ENCODE measurements at regions of chr1 and their contacts with region 1.

Region 1: DNA sequence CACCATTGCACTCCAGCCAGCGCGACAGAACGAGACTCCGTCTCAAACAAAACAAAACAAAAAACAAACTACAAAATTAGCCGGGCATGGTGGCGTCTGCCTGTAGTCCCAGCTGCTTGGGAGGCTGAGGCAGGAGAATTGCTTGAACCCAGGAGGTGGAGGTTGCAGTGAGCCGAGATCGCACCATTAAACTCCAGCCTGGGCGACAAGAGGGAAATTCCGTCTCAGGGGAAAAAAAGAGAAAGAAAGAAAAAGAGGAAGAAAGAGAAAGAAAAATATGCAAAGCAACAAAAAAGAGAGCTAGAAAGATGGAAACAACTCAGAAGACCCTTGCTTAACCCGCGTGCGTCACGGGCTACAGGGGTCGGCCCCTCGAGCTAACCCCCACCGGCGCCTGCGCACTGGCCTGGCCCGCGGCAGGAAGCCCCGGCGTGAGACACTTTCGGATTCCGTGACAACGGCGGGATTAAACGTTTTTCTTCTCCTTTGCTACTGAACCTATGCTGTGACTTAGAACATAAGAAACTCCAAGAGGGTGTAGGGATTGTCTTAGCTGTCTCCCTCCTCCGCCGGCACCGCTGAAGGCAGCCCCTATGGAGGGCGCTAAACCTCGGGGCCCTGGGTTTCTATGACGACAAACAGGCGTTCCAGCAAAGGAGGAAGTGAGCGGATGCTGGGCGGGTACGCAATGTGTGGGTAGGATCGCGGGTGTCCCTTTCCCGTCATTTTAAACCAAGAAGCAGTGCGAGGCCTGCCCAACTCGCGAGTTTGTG is at the start of gene AXDND1:
- DNase-seq: peak; percentile 79
- H3K4me3 Mint-ChIP-seq: peak within 1 kb of the TSS; percentile 77
- H3K27ac Mint-ChIP-seq: peak within 1 kb of the TSS; percentile 99
- H3K4me1 Mint-ChIP-seq: peaks cover 5% of the 10 kb centered on the region
- H3K27me3 Mint-ChIP-seq: no peaks in the 10 kb centered on the region
- CTCF ChIP-seq: no peak
- total RNA-seq, gene AXDND1: 1.1 and 1.7 TPM in 2 replicates

Region 2: DNA sequence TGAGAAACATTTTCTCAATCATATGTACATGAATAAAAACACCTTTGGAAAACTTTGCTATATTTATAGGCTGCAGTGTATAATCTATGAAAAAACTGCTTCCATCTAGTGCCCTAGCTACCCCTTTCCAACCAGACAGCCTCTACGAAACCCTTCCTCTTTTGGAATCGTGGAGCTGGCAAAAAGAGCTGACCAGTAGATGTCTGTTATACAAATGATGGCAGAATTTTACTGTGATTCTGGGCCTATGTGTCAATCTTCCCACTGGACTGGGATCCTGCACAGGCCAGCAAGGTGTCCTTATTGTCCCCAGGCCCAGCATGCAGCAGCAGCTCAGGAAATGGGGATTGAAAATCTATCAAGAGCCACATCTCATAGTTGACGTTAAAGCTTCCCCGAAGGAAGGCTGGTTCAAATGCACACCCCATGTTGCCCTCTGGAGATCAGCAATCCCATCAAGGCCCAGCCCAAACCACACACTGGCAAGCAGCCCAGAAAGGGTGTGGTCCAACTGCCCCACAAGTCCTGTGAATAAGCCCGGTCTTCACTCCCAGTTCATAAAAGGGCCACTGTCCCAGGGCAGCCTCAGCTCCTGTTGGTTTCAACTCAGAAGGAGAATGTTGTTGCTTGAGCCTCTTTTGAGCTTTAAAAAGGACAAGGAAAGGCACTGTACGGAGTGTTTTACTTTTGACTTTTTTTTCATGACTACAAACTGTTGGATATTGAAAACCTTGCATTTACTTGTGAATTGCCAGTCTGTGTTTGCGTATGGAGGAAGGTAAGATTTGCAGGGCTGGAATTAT is 348.6 kb before region 1 on chr1:
- CTCF ChIA-PET with region 1: interaction called, 3 read pairs
- POLR2A ChIA-PET with region 1: no interaction called
- intact Hi-C with region 1: loop called (anchors 10 kb)
- DNase-seq: peak; percentile 99
- H3K4me3 Mint-ChIP-seq: peak overlapping the region; percentile 26
- H3K27ac Mint-ChIP-seq: peak overlapping the region; percentile 54
- H3K4me1 Mint-ChIP-seq: peaks cover 29% of the 10 kb centered on the region
- H3K27me3 Mint-ChIP-seq: no peaks in the 10 kb centered on the region
- CTCF ChIP-seq: no peak

Region 3: DNA sequence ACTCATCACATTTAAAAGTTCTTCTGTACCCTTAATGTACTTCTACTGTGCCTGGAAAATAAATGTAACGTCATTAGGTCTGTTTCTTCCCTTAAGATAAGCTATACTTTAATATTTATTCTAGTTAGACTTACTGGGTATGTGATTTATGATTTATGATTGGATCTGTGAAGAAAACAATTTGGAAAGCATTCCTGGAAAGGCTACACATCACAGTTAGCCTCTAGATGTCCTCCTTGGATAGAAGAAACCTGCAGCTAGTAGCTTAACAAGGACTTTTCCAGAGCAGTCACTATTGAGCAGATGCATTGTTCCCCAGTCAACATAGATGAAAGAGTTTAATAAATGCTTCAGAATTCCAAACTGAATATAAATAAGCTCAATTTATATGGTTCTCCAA is 113.8 kb before region 1 on chr1:
- CTCF ChIA-PET with region 1: interaction called, 175 read pairs
- POLR2A ChIA-PET with region 1: interaction called, 10 read pairs
- intact Hi-C with region 1: loop called (anchors 1 kb)
- DNase-seq: peak; percentile 56
- H3K4me3 Mint-ChIP-seq: no peak overlapping the region
- H3K27ac Mint-ChIP-seq: no peak overlapping the region
- H3K4me1 Mint-ChIP-seq: no peaks in the 10 kb centered on the region
- H3K27me3 Mint-ChIP-seq: no peaks in the 10 kb centered on the region
- CTCF ChIP-seq: peak; percentile 73

Region 4: GRCh38 chr1:179353546-179353945 is 12.0 kb before region 1 on chr1:
- CTCF ChIA-PET with region 1: interaction called, 23 read pairs
- POLR2A ChIA-PET with region 1: interaction called, 6 read pairs
- intact Hi-C with region 1: no loop called
- DNase-seq: no peak
- H3K4me3 Mint-ChIP-seq: no peak overlapping the region
- H3K27ac Mint-ChIP-seq: no peak overlapping the region
- H3K4me1 Mint-ChIP-seq: no peaks in the 10 kb centered on the region
- H3K27me3 Mint-ChIP-seq: no peaks in the 10 kb centered on the region
- CTCF ChIP-seq: no peak

Region 5: DNA sequence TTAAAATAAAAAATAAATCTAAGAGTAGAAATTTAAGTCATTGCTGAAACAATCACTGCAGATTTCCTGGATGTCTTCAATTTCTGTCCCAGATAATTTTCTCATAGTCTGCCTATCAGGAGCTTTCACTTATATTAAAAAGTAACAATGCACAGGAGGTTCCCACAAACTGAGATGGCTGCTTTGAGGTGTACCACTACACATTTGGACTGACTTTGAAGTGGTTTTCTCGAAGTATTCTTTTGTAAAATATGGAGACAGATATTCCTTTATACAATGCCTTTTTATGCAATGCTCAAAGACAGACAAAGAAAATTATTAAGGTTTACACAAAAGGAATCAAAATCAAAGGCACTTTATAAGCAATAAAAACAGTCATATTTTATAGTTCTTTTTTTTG is 487.6 kb after region 1 on chr1:
- CTCF ChIA-PET with region 1: no interaction called
- POLR2A ChIA-PET with region 1: no interaction called
- intact Hi-C with region 1: no loop called
- DNase-seq: no peak
- H3K4me3 Mint-ChIP-seq: no peak overlapping the region
- H3K27ac Mint-ChIP-seq: no peak overlapping the region
- H3K4me1 Mint-ChIP-seq: peaks cover 7% of the 10 kb centered on the region
- H3K27me3 Mint-ChIP-seq: no peaks in the 10 kb centered on the region
- CTCF ChIP-seq: no peak

Measured in MCF 10A (cell line).